ENCODE measurements at regions of chr5 and their contacts with region 1.

Region 1: GRCh38 chr5:173764321-173765029 is 123.7 kb upstream of the CPEB4 start:
- DNase-seq: peak; percentile 89 to 95
- H3K4me3 ChIP-seq: no peak overlapping the region
- H3K27ac ChIP-seq: peak overlapping the region; percentile 91
- H3K4me1 ChIP-seq: peaks cover 46% of the 10 kb centered on the region
- H3K27me3 ChIP-seq: no peaks in the 10 kb centered on the region
- CTCF ChIP-seq: no peak

Region 2: DNA sequence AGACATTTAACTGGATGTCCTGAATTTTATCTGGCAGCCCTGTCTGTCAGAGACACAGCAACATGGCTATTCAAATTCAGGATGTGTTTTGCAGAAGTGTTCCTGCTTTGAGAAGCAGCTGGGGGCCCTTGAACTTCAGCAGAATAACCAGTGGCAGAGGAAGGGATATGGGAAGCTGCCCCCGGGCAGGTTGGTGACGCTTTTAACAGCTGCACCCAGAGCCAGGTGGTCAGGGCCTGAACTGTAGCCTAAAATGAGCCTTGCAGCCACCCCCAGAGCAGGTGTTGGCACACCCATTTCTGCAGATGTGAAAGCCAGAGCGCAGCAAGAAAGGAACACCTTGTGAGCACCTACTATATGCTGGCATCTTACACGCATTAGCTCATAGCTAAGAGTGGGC is 19.4 kb before region 1 on chr5:
- CTCF ChIA-PET with region 1: interaction called, 3 read pairs
- POLR2A ChIA-PET with region 1: interaction called, 4 read pairs
- intact Hi-C with region 1: loop called (anchors 1 kb)
- DNase-seq: peak in 1 of 2 experiments; percentile 41
- H3K4me3 ChIP-seq: peak overlapping the region; percentile 8; the same call in 1 of the 2 replicates
- H3K27ac ChIP-seq: peak overlapping the region; percentile 80
- H3K4me1 ChIP-seq: peaks cover 27% of the 10 kb centered on the region
- H3K27me3 ChIP-seq: no peaks in the 10 kb centered on the region
- CTCF ChIP-seq: no peak

Region 3: DNA sequence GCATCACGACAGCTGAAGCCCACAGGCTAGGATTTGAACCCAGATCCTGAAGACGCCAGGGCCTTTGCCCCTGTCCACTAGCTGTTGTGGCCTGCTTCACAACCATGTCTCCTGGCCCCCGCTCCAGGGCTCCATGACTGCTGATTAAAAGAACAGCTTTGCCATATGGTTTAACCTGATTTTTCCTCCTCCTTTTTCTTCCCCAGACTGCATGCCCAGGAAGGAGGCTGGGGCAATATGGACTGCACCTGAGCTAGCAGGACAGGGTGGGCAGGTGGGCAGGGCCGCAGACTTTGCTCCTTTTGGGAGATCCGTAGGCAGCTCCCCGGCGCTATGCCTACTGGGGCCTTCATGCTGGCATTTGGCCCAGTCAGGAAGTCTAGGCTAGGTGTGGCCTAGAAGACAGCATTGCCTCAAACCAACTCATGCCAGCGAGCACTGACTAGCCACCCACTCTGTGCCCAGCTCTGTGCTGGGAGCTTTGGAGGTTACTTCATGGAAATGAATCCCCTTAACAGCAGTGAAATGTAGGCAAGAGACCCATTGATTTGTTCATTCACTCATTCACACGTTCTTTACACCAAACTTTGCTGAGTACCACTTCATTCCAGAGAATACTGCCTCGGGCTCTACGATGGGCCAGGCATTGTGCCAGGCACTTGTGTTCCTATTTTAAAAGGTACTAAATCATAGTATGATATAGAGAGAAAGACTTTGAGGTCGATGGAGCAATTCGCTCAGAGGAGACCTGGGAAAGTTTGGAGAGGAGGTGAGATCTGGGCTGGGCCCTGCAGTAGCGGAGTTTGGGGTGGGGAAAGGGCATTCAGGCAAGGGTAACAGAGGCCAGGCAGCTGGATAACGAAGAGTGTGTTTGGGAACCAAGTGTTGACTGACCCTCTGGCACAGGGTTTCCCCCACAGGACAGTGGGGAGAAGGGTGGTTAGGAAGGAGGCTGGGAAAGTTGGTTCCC is 29.5 kb after region 1 on chr5:
- CTCF ChIA-PET with region 1: no interaction called
- POLR2A ChIA-PET with region 1: interaction called, 4 read pairs
- intact Hi-C with region 1: loop called (anchors 1 kb)
- DNase-seq: peak; percentile 51 to 64
- H3K4me3 ChIP-seq: no peak overlapping the region
- H3K27ac ChIP-seq: peak overlapping the region; percentile 74
- H3K4me1 ChIP-seq: peaks cover 70% of the 10 kb centered on the region
- H3K27me3 ChIP-seq: no peaks in the 10 kb centered on the region
- CTCF ChIP-seq: no peak

Region 4: GRCh38 chr5:173868076-173868880 is 103.8 kb after region 1 on chr5:
- CTCF ChIA-PET with region 1: no interaction called
- POLR2A ChIA-PET with region 1: interaction called, 3 read pairs
- intact Hi-C with region 1: loop called (anchors 1 kb)
- DNase-seq: peak; percentile 72 to 96
- H3K4me3 ChIP-seq: peak overlapping the region; percentile 35; the same call in 1 of the 2 replicates
- H3K27ac ChIP-seq: peak overlapping the region; percentile 84
- H3K4me1 ChIP-seq: peaks cover 61% of the 10 kb centered on the region
- H3K27me3 ChIP-seq: no peaks in the 10 kb centered on the region
- CTCF ChIP-seq: no peak

Region 5: GRCh38 chr5:174690271-174690670 is 925.8 kb after region 1 on chr5:
- CTCF ChIA-PET with region 1: no interaction called
- POLR2A ChIA-PET with region 1: interaction called, 14 read pairs
- intact Hi-C with region 1: no loop called
- DNase-seq: peak in 1 of 2 experiments; percentile 45
- H3K4me3 ChIP-seq: no peak overlapping the region
- H3K27ac ChIP-seq: no peak overlapping the region
- H3K4me1 ChIP-seq: no peaks in the 10 kb centered on the region
- H3K27me3 ChIP-seq: peaks cover 92% of the 10 kb centered on the region
- CTCF ChIP-seq: no peak

Measured in PC-9 (cell line).